Lower lobe of right lung (tissue), 2 donors: ENCODE measurements at regions of chr2 and their contacts with region 1.

Region 1: DNA sequence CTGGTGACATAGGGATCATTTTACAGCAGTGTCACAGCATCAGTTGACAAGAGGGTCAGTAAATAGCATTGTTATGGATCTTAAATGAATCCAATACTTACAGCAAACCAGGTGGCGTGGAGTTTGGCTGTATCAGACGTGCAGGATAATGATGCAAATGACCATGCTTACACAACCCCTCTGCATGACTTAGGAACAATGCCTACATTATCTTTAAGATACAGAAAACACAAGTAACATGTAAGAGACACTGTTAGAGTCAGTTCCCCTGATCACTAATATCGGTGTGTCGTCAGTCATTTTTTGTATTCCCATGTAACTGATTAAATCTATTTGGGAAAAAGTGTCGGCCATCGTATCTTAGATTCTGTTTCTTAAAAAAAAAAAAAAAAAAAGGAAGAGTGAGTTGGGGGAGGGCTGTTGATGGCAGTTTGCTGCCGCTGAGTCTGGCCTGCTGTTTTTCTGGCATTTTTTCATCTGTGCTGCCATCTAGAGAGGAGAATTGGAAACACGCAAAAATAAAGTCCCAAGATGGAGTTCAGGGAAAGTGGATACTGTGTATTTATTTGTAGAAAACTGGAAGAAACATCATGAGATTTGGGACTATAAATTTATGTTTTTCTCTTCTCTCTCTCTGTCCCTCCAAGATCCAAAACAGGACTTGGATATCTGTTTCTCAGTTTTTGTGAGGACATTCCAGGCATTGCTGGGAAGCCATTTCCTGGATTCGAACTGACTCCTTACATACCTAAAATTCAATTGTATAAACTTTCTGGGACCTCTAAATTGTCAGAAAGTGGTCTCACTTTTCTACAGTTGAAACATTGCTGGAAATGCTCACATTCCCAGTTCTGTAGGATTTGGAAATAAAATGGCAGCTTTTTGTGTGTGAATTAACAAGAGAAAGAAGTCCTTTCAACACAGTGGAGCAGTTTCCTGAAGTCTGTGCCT is 60.3 kb upstream of the AGPS start:
- DNase-seq: no peak
- ATAC-seq: peak; percentile 87 to 90
- H3K4me3 ChIP-seq: peak overlapping the region; percentile 11
- H3K27ac ChIP-seq: peak overlapping the region; percentile 32
- H3K4me1 ChIP-seq: peaks cover 7% of the 10 kb centered on the region
- H3K27me3 ChIP-seq: no peaks in the 10 kb centered on the region
- CTCF ChIP-seq: peak; percentile 65

Region 2: GRCh38 chr2:177419274-177419673 is 87.0 kb after region 1 on chr2:
- intact Hi-C with region 1: loop called (anchors 10 kb)
- DNase-seq: no peak
- ATAC-seq: no peak
- H3K4me3 ChIP-seq: no peak overlapping the region
- H3K27ac ChIP-seq: no peak overlapping the region
- H3K4me1 ChIP-seq: peaks cover 16% of the 10 kb centered on the region
- H3K27me3 ChIP-seq: no peaks in the 10 kb centered on the region
- CTCF ChIP-seq: no peak

Region 3: DNA sequence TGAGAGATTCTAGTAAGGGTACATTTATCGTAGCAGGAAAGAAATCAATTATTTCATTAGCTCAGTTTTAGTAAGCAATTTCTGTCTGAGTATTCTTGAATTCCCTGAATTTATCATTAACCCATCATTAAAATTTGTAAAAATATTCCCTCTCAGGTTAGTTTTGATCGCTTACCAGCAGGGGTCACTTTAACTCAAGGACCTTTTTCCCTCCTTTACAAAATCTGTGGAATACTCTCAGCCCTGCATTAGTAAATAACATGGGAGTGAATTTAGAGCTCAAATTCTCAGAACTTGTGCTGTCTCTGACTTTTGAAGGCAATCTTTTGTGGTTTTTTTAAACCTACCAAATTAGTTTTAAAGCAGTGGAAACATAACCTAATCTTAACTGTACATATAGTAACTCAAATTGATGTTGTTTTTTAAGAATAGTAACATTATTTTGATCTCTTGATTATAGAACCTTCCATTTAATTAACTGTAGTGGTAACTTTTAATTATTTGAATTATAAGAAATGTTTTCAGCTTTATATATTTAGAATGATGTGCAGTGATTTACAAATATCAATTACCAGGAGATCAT is 157.5 kb after region 1 on chr2:
- intact Hi-C with region 1: no loop called
- DNase-seq: no peak
- ATAC-seq: no peak
- H3K4me3 ChIP-seq: no peak overlapping the region
- H3K27ac ChIP-seq: no peak overlapping the region
- H3K4me1 ChIP-seq: no peaks in the 10 kb centered on the region
- H3K27me3 ChIP-seq: no peaks in the 10 kb centered on the region
- CTCF ChIP-seq: peak; percentile 49